ENCODE measurements at regions of chr3 and their contacts with region 1.

Region 1: GRCh38 chr3:100097919-100098783 is 16.1 kb downstream of the FILIP1L start:
- DNase-seq: peak; percentile 49 to 96
- H3K4me3 ChIP-seq: peak overlapping the region; percentile 6; the same call in 1 of the 2 replicates
- H3K27ac ChIP-seq: peak overlapping the region; percentile 40
- H3K4me1 ChIP-seq: peaks cover 46% of the 10 kb centered on the region
- H3K27me3 ChIP-seq: no peaks in the 10 kb centered on the region
- CTCF ChIP-seq: no peak

Region 2: DNA sequence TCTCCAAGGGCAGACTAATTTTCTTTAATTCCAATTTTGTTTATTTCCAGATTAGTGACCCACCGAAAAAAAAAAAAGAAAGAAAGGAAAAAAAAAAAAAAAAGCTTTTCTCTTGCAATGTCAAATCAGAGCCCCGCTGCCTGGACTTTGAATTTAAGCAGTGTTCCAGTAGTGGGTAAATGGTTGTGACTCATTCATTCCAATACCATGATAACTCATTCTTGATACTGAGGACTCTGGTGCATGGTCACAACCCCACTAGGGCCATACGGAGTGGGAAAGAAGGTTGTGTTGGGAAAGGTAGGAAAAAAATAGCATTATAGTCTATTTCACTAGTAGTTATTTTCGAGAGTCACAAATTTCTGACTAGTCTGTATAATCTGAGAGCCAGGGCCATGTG is 518.9 kb before region 1 on chr3:
- CTCF ChIA-PET with region 1: no interaction called
- POLR2A ChIA-PET with region 1: no interaction called
- intact Hi-C with region 1: no loop called
- DNase-seq: no peak
- H3K4me3 ChIP-seq: no peak overlapping the region
- H3K27ac ChIP-seq: no peak overlapping the region
- H3K4me1 ChIP-seq: no peaks in the 10 kb centered on the region
- H3K27me3 ChIP-seq: no peaks in the 10 kb centered on the region
- CTCF ChIP-seq: no peak

Region 3: GRCh38 chr3:99997293-99997692 is 100.9 kb before region 1 on chr3:
- CTCF ChIA-PET with region 1: no interaction called
- POLR2A ChIA-PET with region 1: no interaction called
- intact Hi-C with region 1: no loop called
- DNase-seq: no peak
- H3K4me3 ChIP-seq: no peak overlapping the region
- H3K27ac ChIP-seq: no peak overlapping the region
- H3K4me1 ChIP-seq: peaks cover 14% of the 10 kb centered on the region
- H3K27me3 ChIP-seq: no peaks in the 10 kb centered on the region
- CTCF ChIP-seq: no peak

Region 4: GRCh38 chr3:100159331-100160153 is 61.4 kb after region 1 on chr3:
- CTCF ChIA-PET with region 1: no interaction called
- POLR2A ChIA-PET with region 1: interaction called, 3 read pairs
- intact Hi-C with region 1: loop called (anchors 1 kb)
- DNase-seq: peak; percentile 29 to 97
- H3K4me3 ChIP-seq: peak overlapping the region; percentile 10
- H3K27ac ChIP-seq: peak overlapping the region; percentile 75
- H3K4me1 ChIP-seq: peaks cover 39% of the 10 kb centered on the region
- H3K27me3 ChIP-seq: no peaks in the 10 kb centered on the region
- CTCF ChIP-seq: no peak